Transverse colon (tissue), 4 donors: ENCODE measurements at regions of chr6 and their contacts with region 1.

Region 1: GRCh38 chr6:21653905-21654304 is 60.4 kb downstream of the SOX4 start:
- DNase-seq: no peak
- H3K4me3 ChIP-seq: no peak overlapping the region
- H3K27ac ChIP-seq: no peak overlapping the region
- H3K4me1 ChIP-seq: peaks cover 0 to 6% (median 0%) of the 10 kb centered on the region in 4 donors
- H3K27me3 ChIP-seq: no peaks in the 10 kb centered on the region
- CTCF ChIP-seq: no peak
- EP300 ChIP-seq: no peak
- POLR2A ChIP-seq: no peak

Region 2: DNA sequence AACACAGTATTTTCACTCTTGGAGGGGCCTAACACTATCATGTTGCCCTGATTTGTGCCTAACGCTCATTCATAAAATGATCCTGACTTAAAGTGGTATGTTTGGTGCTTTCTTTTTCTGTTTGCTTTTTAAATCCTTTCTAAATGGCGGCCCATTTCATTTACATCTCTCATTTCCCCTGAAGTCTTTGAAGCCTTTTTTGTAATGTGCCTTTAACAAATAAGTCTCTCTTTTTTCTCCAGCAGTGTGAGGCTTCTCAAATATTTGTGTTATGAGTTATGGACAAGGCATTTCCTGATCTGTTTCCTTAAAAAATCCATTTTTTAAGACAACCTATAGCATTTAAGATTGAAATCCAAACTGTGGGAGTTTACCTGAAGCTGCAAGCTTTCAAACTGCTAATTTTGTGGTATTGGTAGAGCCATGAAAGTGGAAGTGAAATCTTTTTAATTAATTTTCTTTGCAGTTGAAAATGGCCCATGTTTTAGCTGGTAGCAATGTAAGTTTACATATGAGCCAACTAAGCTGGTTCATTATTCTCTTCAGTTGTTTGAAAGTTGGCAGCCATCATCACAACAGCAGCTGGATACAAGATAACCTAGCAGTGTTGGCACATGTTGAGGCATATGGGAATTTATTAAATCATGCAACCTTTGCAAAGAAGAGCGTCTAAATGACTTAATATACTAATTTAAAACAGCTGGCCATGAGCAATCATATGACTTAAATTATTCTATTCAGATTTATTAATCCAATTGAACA is 649.9 kb before region 1 on chr6:
- in situ Hi-C with region 1: no loop called
- intact Hi-C with region 1: loop called (anchors 5 kb)
- DNase-seq: no peak
- H3K4me3 ChIP-seq: no peak overlapping the region
- H3K27ac ChIP-seq: no peak overlapping the region
- H3K4me1 ChIP-seq: peaks cover 0 to 8% (median 3%) of the 10 kb centered on the region in 4 donors
- H3K27me3 ChIP-seq: no peaks in the 10 kb centered on the region
- CTCF ChIP-seq: no peak
- EP300 ChIP-seq: no peak
- POLR2A ChIP-seq: no peak

Region 3: GRCh38 chr6:21885532-21886114 is 231.7 kb after region 1 on chr6:
- in situ Hi-C with region 1: no loop called
- intact Hi-C with region 1: no loop called
- DNase-seq: no peak
- H3K4me3 ChIP-seq: no peak overlapping the region
- H3K27ac ChIP-seq: peak overlapping the region; percentile 37 to 67 (median 49)
- H3K4me1 ChIP-seq: peaks cover 5 to 20% (median 6%) of the 10 kb centered on the region in 4 donors
- H3K27me3 ChIP-seq: no peaks in the 10 kb centered on the region
- CTCF ChIP-seq: no peak
- EP300 ChIP-seq: no peak
- POLR2A ChIP-seq: no peak